Left ventricle myocardium superior (tissue), 1 donor: ENCODE measurements at regions of chr17 and their contacts with region 1.

Region 1: GRCh38 chr17:47315451-47316266 is 8.1 kb upstream of the EFCAB13 start:
- DNase-seq: no peak
- ATAC-seq: peak; percentile 84

Region 2: GRCh38 chr17:47230864-47231263 is 84.8 kb before region 1 on chr17:
- intact Hi-C with region 1: loop called (anchors 1 kb)
- DNase-seq: no peak
- ATAC-seq: no peak

Region 3: GRCh38 chr17:47265983-47266541 is 49.6 kb before region 1 on chr17:
- intact Hi-C with region 1: no loop called
- DNase-seq: no peak
- ATAC-seq: peak; percentile 59

Region 4: GRCh38 chr17:47373002-47373401 is 57.3 kb after region 1 on chr17:
- intact Hi-C with region 1: no loop called
- DNase-seq: no peak
- ATAC-seq: no peak